K562 (cell line): ENCODE measurements at regions of chr18 and their contacts with region 1.

Region 1: DNA sequence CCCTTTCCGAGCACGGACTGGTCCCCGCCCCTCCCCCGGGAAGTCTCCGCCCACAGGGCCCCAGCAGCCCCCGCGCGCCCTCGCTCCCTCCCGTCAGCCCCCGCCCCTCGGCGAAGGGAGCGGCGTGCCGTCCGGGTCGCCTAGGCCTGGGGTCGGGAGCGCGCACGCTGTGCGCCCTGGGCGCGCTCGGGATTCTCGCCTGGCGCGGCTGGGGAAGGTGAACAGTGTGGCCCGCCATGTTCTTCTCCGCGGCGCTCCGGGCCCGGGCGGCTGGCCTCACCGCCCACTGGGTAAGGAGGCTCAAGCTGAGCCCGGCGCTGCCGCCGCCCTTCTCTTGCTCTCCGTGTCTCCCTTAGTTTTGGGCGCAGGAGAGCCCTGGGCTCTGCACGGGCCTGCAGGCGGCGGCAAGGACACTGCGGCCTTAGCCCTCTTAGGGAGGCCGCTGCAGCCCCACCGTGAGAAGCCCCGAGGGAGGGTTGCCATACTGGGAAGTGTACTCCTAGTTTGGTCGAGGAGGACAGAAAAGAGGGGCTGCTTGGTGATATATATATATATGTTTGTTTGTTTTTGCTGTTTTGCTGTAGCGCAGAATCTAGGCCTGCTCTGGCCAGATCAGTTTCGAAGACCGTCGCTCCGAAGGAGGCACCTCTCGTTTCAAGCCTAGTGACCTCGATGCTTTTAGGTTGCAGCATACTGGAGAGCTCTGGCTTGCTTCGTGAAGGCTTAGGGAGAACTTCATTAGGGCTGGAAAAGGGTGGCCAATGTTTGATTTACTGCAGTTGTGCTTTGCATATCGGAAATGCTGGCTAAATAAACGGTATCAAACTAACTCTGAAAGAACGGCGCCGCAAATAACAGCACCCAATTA is at the start of gene NDUFV2:
- DNase-seq: peak; percentile 99 to 100 (median 100)
- ATAC-seq: peak; percentile 90
- H3K4me3 ChIP-seq: peak within 1 kb of the TSS; percentile 51
- H3K27ac ChIP-seq: peak within 1 kb of the TSS; percentile 80
- H3K4me1 ChIP-seq: peaks cover 5 to 19% of the 10 kb centered on the region in 2 experiments
- H3K27me3 ChIP-seq: no peaks in the 10 kb centered on the region
- CTCF ChIP-seq: 0 out of 6 replicates have a peak, but pooled peaks of 1 of the 3 experiments have one; percentile 5
- EP300 ChIP-seq: no peak
- POLR2A ChIP-seq: peak; percentile 93
- RAD21 ChIP-seq: no peak
- polyA plus RNA-seq, gene NDUFV2: 384 to 550 TPM

Region 2: DNA sequence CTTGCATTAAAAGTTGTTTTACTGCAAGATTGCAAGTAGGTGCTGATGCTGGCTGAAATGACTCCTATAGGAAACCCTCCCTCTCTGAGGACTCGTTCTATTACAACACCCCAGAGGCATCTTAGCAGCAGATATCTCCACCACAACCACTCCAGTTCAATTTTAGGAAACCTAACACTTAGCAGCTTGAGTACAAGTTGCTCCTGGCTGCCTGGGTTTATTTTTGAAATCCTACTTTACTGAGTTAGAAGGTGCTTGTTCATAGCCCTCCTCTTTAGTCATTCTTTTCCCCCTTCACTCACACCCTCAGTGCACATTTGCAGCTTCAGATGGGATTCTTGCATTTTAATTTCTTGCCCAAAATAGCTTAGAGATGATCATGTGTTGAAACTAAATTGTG is 285.9 kb before region 1 on chr18:
- CTCF ChIA-PET with region 1: no interaction called
- POLR2A ChIA-PET with region 1: no interaction called
- in situ Hi-C with region 1: no loop called
- intact Hi-C with region 1: no loop called
- DNase-seq: no peak
- ATAC-seq: no peak
- H3K4me3 ChIP-seq: no peak overlapping the region
- H3K27ac ChIP-seq: no peak overlapping the region
- H3K4me1 ChIP-seq: peaks cover 0 to 3% of the 10 kb centered on the region in 2 experiments; a peak in 2 of 5 replicates
- H3K27me3 ChIP-seq: peaks cover 7 to 10% of the 10 kb centered on the region in 2 experiments; a peak in 3 of 5 replicates
- CTCF ChIP-seq: no peak
- EP300 ChIP-seq: no peak
- POLR2A ChIP-seq: no peak
- RAD21 ChIP-seq: no peak

Region 3: GRCh38 chr18:8998481-8999217 is 104.1 kb before region 1 on chr18:
- CTCF ChIA-PET with region 1: no interaction called
- POLR2A ChIA-PET with region 1: no interaction called
- in situ Hi-C with region 1: no loop called
- intact Hi-C with region 1: no loop called
- DNase-seq: peak in 3 of 4 experiments; percentile 39 to 48 (median 40)
- ATAC-seq: peak; percentile 17; the same call in 2 of the 3 replicates
- H3K4me3 ChIP-seq: no peak overlapping the region
- H3K27ac ChIP-seq: peak overlapping the region; percentile 40; the same call in 2 of the 3 replicates
- H3K4me1 ChIP-seq: peaks cover 14 to 52% of the 10 kb centered on the region in 2 experiments
- H3K27me3 ChIP-seq: no peaks in the 10 kb centered on the region
- CTCF ChIP-seq: no peak
- EP300 ChIP-seq: peak; percentile 76
- POLR2A ChIP-seq: no peak
- RAD21 ChIP-seq: peak in 1 of 2 experiments; percentile 26; a peak in 2 of 4 replicates

Region 4: GRCh38 chr18:9082711-9083510 is 19.8 kb before region 1 on chr18:
- CTCF ChIA-PET with region 1: no interaction called
- POLR2A ChIA-PET with region 1: interaction called, 3 read pairs
- in situ Hi-C with region 1: no loop called
- intact Hi-C with region 1: loop called (anchors 2 kb)
- DNase-seq: no peak
- ATAC-seq: peak; percentile 26; the same call in 2 of the 3 replicates
- H3K4me3 ChIP-seq: no peak overlapping the region
- H3K27ac ChIP-seq: no peak overlapping the region
- H3K4me1 ChIP-seq: no peaks in the 10 kb centered on the region; a peak in 2 of 5 replicates
- H3K27me3 ChIP-seq: no peaks in the 10 kb centered on the region
- CTCF ChIP-seq: no peak
- EP300 ChIP-seq: no peak
- POLR2A ChIP-seq: no peak
- RAD21 ChIP-seq: no peak

Region 5: DNA sequence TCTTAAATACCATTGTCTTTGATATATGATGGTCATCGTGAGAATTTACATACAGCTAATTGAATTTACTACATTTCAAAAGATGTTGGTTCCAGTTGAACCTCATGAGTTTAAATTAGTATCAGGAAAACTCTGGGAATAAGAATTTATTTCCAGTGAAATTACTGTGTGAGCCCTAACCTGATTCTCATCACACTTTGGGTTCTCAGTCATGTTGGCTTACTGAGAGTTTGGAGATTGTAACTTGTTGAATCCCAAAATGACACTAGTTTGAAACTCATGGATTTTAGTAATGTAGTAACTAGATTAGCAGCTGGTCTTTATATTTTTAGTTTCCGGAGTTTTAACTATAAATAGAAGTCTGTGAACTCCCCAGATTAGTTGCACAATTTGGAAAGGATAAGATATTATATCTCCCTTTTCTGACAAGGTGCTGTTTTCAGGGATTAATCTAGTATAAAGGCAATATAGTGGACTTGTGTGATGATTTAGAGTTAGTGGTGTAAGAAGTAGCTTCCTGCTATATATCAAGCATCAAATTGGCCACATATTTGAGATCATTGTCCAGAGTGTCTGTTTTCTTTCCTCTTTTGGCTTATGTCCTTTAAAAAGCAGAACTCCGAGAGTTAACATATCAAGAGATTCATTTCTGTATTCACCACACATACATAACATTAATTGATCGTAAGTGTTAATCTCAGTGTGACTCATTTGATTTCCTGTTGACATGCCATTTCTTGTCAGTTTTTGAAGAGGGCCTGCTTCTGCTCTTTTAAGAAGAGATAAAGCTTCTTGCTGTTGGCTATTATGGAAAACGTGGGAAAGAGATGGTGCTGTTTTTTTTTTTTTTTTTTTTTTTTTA is 15.5 kb after region 1 on chr18:
- CTCF ChIA-PET with region 1: no interaction called
- POLR2A ChIA-PET with region 1: interaction called, 53 read pairs
- in situ Hi-C with region 1: no loop called
- intact Hi-C with region 1: no loop called
- DNase-seq: peak in 1 of 4 experiments; percentile 40
- ATAC-seq: peak; percentile 5; the same call in 1 of the 3 replicates
- H3K4me3 ChIP-seq: no peak overlapping the region
- H3K27ac ChIP-seq: peak overlapping the region; percentile 71; the same call in 2 of the 3 replicates
- H3K4me1 ChIP-seq: peaks cover 8 to 48% of the 10 kb centered on the region in 2 experiments
- H3K27me3 ChIP-seq: no peaks in the 10 kb centered on the region
- CTCF ChIP-seq: no peak
- EP300 ChIP-seq: peak; percentile 10; the same call in 1 of the 2 replicates
- POLR2A ChIP-seq: no peak
- RAD21 ChIP-seq: no peak

Region 6: DNA sequence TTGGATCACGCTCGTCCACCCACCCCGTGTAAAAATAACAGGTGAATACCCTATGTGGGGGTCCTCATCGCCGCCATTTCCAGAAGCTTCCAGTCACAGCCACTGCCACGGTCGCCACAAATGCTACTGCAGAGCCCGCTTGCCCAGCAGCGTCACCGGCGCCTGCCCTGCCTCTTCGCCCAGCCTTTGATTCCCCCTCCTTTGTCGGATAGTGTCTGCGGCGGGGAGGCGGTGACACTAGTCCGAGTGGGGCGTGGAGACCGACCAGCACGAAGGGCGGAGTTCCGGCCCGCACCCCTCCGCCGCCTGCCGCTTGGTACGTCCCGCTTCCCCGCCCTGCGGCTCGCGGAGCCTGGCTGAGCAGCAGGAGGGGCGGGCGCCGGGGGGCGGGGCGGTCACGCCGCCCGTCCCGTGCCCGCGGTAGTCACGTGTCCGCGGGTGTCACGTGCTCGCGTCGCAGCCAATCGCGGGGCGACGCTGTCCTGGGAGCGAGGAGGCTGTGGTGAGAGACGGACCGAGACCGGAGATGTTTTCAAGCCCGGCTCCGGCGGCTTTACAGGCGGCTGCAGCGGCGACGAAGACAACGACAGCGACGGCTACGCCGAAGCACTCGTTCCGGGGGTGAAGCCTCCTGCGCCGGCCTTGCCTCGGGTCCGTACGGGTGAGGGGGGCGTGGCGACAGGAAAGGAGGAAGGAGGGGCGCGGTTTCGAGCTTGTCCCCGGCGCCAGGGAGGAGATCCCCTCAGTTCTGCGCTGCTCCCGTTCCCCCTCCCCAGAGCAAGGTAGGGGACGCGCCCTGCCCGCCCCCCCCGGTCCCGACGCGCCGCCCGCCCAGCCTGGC is 33.8 kb after region 1 on chr18 and contains the start of gene ANKRD12:
- CTCF ChIA-PET with region 1: no interaction called
- POLR2A ChIA-PET with region 1: interaction called, 14 read pairs
- in situ Hi-C with region 1: no loop called
- intact Hi-C with region 1: loop called (anchors 2 kb)
- DNase-seq: peak; percentile 98 to 99 (median 99)
- ATAC-seq: peak; percentile 86
- H3K4me3 ChIP-seq: peak within 1 kb of the TSS; percentile 75
- H3K27ac ChIP-seq: peak within 1 kb of the TSS; percentile 90
- H3K4me1 ChIP-seq: peaks cover 9 to 14% of the 10 kb centered on the region in 2 experiments; a peak in 4 of 5 replicates
- H3K27me3 ChIP-seq: no peaks in the 10 kb centered on the region
- CTCF ChIP-seq: no peak
- EP300 ChIP-seq: peak; percentile 61
- POLR2A ChIP-seq: peak; percentile 82
- RAD21 ChIP-seq: no peak
- polyA plus RNA-seq, gene ANKRD12: 12.3 to 15.7 TPM

Region 7: DNA sequence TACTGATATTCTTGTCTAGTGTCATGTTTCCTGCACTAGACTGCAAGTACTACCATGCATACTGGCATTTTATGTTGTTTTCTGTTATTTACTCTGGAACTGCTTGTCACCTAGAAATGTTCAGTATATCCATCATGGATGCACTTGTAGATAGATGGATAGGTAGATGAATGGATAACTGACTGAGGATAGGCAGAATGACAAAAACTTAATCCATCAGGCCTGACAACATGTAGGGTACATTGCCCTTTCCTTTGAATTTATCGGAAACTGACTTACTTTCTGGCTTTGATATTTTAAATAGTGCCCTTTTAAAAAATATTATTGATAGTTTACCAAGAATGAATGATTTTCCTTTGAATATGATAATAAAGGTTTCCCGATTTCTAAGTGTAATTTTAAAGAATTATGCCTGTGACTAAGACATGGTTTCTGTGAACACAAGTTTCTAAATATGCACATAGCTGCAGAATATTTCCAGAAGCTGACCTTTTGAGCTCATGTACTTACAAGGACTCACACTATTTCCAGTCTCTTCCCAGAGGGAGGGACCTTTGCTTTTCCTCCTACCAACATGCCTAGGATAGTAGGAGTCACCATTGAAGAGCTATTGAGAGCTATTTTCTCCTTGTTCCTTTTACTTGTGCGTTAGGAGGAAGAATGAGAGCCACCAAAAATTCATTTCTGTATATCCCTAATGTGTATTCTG is 115.2 kb after region 1 on chr18:
- CTCF ChIA-PET with region 1: no interaction called
- POLR2A ChIA-PET with region 1: no interaction called
- in situ Hi-C with region 1: no loop called
- intact Hi-C with region 1: no loop called
- DNase-seq: no peak
- ATAC-seq: no peak
- H3K4me3 ChIP-seq: no peak overlapping the region
- H3K27ac ChIP-seq: no peak overlapping the region
- H3K4me1 ChIP-seq: no peaks in the 10 kb centered on the region
- H3K27me3 ChIP-seq: no peaks in the 10 kb centered on the region
- CTCF ChIP-seq: no peak
- EP300 ChIP-seq: no peak
- POLR2A ChIP-seq: no peak
- RAD21 ChIP-seq: no peak

Region 8: GRCh38 chr18:9643549-9643948 is 540.8 kb after region 1 on chr18:
- CTCF ChIA-PET with region 1: no interaction called
- POLR2A ChIA-PET with region 1: no interaction called
- in situ Hi-C with region 1: no loop called
- intact Hi-C with region 1: no loop called
- DNase-seq: no peak
- ATAC-seq: 0 out of 3 replicates have a peak, but pooled peaks have one; percentile 43
- H3K4me3 ChIP-seq: no peak overlapping the region
- H3K27ac ChIP-seq: no peak overlapping the region
- H3K4me1 ChIP-seq: no peaks in the 10 kb centered on the region; a peak in 1 of 5 replicates
- H3K27me3 ChIP-seq: no peaks in the 10 kb centered on the region
- CTCF ChIP-seq: no peak
- EP300 ChIP-seq: no peak
- POLR2A ChIP-seq: no peak
- RAD21 ChIP-seq: no peak